ENCODE measurements at regions of chr2 and their contacts with region 1.

Region 1: GRCh38 chr2:220228299-220229006 is 601.0 kb downstream of the SLC4A3 start:
- DNase-seq: peak; percentile 81
- H3K4me3 Mint-ChIP-seq: peak overlapping the region; percentile 59
- H3K27ac Mint-ChIP-seq: peak overlapping the region; percentile 80
- H3K4me1 Mint-ChIP-seq: peaks cover 78% of the 10 kb centered on the region
- H3K27me3 Mint-ChIP-seq: no peaks in the 10 kb centered on the region
- CTCF ChIP-seq: no peak

Region 2: GRCh38 chr2:220188031-220188430 is 40.4 kb before region 1 on chr2:
- CTCF ChIA-PET with region 1: interaction called, 4 read pairs
- intact Hi-C with region 1: loop called (anchors 2 kb)
- DNase-seq: peak; percentile 70
- H3K4me3 Mint-ChIP-seq: peak overlapping the region; percentile 33
- H3K27ac Mint-ChIP-seq: peak overlapping the region; percentile 93
- H3K4me1 Mint-ChIP-seq: peaks cover 41% of the 10 kb centered on the region
- H3K27me3 Mint-ChIP-seq: no peaks in the 10 kb centered on the region
- CTCF ChIP-seq: no peak

Region 3: DNA sequence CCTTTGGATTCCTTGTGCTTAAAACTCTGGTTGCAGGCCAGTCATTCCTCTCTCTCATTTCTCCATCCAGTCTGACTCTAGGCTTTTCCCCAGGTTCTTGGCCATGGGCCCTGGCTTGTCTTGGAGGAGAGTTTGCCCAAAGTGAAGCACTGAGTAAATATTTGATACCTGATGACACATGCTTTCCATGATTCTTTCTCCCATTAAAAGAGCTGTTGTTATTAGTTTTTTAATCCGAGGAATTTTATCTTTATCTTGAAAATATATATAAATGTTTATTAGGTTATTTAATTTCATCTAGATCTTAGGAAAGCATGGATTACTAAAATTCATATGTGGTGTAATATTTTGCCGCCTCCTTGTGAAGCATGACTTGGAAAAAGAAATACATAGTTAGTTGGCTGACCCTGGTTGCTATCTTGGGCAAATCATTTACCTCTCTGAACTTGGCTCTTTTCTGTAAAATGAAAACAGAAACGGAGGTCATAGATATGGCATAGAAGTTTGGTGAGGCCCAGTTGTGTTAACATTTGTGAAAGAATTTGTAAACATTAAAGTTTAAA is 49.1 kb after region 1 on chr2:
- CTCF ChIA-PET with region 1: no interaction called
- intact Hi-C with region 1: loop called (anchors 5 kb)
- DNase-seq: peak; percentile 52
- H3K4me3 Mint-ChIP-seq: no peak overlapping the region
- H3K27ac Mint-ChIP-seq: peak overlapping the region; percentile 64
- H3K4me1 Mint-ChIP-seq: peaks cover 57% of the 10 kb centered on the region
- H3K27me3 Mint-ChIP-seq: no peaks in the 10 kb centered on the region
- CTCF ChIP-seq: no peak

Region 4: DNA sequence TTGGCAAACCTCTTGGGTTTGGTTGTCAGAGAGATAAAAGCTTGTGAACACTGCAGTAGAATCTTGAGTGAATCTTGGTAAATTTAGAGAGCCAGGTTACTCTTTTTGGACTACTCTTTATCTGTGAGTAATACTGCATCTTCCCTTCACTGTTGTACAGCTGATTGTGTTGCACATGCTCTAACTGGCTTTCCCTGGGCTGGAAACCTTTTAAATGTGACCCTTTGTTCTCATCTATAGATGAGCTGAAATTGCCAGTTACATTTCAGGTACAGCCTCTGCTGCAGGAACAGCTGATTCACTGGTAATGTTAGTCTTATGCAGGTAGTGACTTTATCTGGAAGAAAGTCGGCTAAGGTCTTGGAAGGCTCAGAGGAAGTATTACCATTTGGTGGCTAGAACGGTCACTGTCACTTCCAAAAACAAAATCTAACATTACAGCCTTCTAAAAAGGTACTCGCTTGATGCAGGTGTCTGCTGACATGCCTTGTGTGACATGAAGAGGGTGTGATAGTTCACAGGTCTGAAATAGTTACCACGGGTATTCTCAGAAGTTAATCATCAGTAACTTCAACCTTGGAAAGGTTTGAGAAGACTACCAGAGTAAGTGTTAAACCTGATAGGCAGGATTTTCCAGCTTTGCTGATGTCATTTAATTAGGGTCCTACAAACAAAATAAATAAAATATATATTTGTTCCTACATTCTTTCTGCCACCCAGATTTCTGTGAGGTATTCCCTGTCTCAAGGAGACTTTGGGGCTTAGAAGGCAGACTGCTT is 250.0 kb after region 1 on chr2:
- CTCF ChIA-PET with region 1: no interaction called
- intact Hi-C with region 1: no loop called
- DNase-seq: peak; percentile 15
- H3K4me3 Mint-ChIP-seq: no peak overlapping the region
- H3K27ac Mint-ChIP-seq: no peak overlapping the region
- H3K4me1 Mint-ChIP-seq: no peaks in the 10 kb centered on the region
- H3K27me3 Mint-ChIP-seq: no peaks in the 10 kb centered on the region
- CTCF ChIP-seq: no peak

Region 5: GRCh38 chr2:220619558-220620217 is 391.2 kb after region 1 on chr2:
- CTCF ChIA-PET with region 1: no interaction called
- intact Hi-C with region 1: loop called (anchors 5 kb)
- DNase-seq: peak; percentile 72
- H3K4me3 Mint-ChIP-seq: peak overlapping the region; percentile 6
- H3K27ac Mint-ChIP-seq: peak overlapping the region; percentile 93
- H3K4me1 Mint-ChIP-seq: peaks cover 37% of the 10 kb centered on the region
- H3K27me3 Mint-ChIP-seq: no peaks in the 10 kb centered on the region
- CTCF ChIP-seq: no peak

Measured in Calu3 (cell line).